ENCODE measurements at regions of chr14 and their contacts with region 1.

Region 1: DNA sequence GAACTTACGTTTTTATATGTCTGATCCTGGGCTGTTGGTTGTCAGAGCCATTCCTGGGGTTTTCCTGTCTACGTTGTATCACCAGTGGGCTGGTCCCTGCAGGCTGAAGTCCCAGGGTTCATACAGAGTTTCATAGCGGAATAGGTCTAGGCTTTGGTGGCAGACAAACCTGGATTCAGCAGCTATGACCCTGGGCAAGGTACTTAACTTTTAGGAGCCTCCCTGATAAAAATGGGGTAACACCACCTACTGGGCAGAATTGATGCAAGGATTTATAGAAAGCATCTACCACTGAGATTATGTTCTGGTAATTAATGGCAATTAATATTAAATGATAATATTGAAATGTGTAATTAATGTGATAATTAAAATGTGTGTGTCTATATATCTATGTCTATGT is 141.2 kb downstream of the SYNE2 start:
- DNase-seq: no peak
- H3K4me3 ChIP-seq: no peak overlapping the region
- H3K4me1 ChIP-seq: peaks cover 11% of the 10 kb centered on the region
- H3K27me3 ChIP-seq: no peaks in the 10 kb centered on the region

Region 2: GRCh38 chr14:63800651-63801375 is 193.2 kb before region 1 on chr14:
- in situ Hi-C with region 1: loop called (anchors 10 kb)
- DNase-seq: no peak
- H3K4me3 ChIP-seq: no peak overlapping the region
- H3K4me1 ChIP-seq: no peaks in the 10 kb centered on the region; the same call in 1 of the 2 replicates
- H3K27me3 ChIP-seq: no peaks in the 10 kb centered on the region

Region 3: GRCh38 chr14:64062381-64063115 is 68.6 kb after region 1 on chr14:
- in situ Hi-C with region 1: no loop called
- DNase-seq: no peak
- H3K4me3 ChIP-seq: no peak overlapping the region
- H3K4me1 ChIP-seq: peaks cover 9% of the 10 kb centered on the region
- H3K27me3 ChIP-seq: no peaks in the 10 kb centered on the region

Region 4: GRCh38 chr14:64369201-64369600 is 375.2 kb after region 1 on chr14:
- in situ Hi-C with region 1: no loop called
- DNase-seq: no peak
- H3K4me3 ChIP-seq: no peak overlapping the region
- H3K4me1 ChIP-seq: no peaks in the 10 kb centered on the region
- H3K27me3 ChIP-seq: no peaks in the 10 kb centered on the region

Measured in HAP-1 (cell line).